ENCODE measurements at regions of chr11 and their contacts with region 1.

Region 1: GRCh38 chr11:6389921-6390724 is at the start of gene SMPD1:
- DNase-seq: peak; percentile 96 to 97
- ATAC-seq: peak; percentile 97
- H3K4me3 ChIP-seq: peak within 1 kb of the TSS; percentile 61 to 71
- H3K27ac ChIP-seq: peak within 1 kb of the TSS; percentile 31 to 80
- H3K4me1 ChIP-seq: no peaks in the 10 kb centered on the region
- H3K27me3 ChIP-seq: no peaks in the 10 kb centered on the region
- total RNA-seq, gene SMPD1: 29.2 to 40.4 TPM

Region 2: GRCh38 chr11:6419009-6419631 is 29.0 kb after region 1 on chr11 and contains the start of gene APBB1:
- intact Hi-C with region 1: loop called in 1 of 2 experiments (anchors 2 kb)
- DNase-seq: peak; percentile 73 to 91
- ATAC-seq: peak; percentile 94
- H3K4me3 ChIP-seq: peak within 1 kb of the TSS; percentile 81 to 95
- H3K27ac ChIP-seq: peak within 1 kb of the TSS in 1 of 2 donors; percentile 97
- H3K4me1 ChIP-seq: no peaks in the 10 kb centered on the region
- H3K27me3 ChIP-seq: no peaks in the 10 kb centered on the region
- total RNA-seq, gene APBB1: 50.8 to 62.2 TPM

Measured in aorta (tissue), 5 donors.